ENCODE measurements at regions of chr16 and their contacts with region 1.

Region 1: GRCh38 chr16:56191156-56191815 is at the start of gene GNAO1:
- DNase-seq: peak; percentile 81
- total RNA-seq, gene GNAO1: 13.0 TPM

Region 2: GRCh38 chr16:55944377-55944802 is 246.9 kb before region 1 on chr16:
- intact Hi-C with region 1: loop called (anchors 10 kb)
- DNase-seq: peak; percentile 79

Region 3: DNA sequence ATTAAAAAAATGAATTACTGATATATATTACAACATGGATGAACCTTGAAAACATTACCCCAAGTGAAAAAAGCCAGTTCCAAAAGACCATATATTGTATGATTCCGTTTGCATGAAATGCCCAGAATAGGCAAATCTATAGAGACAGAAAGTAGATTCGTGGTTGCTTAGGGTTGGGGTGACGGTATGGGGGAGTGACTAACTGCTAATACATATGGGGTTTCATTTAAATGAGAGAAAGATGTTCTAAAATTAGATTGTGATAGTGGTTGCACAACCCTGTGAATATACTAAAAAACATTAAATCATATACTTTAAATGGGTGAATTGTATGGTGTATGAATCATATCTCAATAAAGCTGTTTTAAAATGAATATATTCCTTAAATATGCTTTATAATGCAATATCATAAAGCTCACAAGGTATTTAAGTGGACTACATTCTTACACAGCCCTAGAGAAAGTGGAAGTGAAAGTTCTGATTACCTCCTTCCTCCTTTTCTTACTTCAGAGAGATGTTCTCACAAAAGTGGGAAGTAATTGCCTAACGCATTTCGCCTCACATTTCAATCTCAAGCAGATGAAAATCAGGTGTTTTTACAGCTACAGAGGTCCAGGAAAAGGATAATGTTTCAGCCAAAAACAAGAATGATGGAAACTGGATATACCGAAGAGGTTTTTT is 142.7 kb before region 1 on chr16:
- intact Hi-C with region 1: loop called (anchors 5 kb)
- DNase-seq: no peak

Region 4: DNA sequence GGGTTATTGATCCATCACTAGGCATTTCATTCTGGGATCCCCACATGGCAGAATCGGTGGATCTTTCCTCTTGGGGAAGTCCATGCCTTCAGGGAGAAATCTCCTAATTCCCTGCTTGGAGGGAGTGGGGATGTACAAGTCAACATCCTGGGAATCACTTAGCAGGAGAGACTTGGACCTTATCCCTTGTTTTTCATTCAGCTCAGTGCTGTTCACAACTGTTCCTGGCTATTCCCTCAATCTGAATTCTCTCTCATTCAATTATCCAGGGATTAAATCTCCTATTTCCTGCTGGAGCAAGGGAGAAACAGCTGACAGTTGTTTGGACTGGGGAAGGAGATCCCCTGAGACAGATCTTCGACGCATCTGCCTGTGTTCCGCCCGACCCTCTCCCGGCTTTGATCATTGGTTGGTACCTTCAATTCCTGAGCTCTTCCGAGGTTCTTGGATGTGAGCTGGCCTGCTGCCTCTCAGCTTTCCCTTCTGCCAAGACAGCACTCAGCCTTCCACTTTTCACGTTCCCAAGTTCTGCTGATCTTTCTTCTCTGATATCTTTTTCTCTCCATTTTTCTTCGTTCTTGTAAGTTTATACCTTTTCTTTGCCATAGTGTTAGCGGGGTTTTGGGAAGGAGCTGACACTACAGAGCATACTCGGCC is 115.4 kb before region 1 on chr16:
- intact Hi-C with region 1: no loop called
- DNase-seq: no peak

Region 5: DNA sequence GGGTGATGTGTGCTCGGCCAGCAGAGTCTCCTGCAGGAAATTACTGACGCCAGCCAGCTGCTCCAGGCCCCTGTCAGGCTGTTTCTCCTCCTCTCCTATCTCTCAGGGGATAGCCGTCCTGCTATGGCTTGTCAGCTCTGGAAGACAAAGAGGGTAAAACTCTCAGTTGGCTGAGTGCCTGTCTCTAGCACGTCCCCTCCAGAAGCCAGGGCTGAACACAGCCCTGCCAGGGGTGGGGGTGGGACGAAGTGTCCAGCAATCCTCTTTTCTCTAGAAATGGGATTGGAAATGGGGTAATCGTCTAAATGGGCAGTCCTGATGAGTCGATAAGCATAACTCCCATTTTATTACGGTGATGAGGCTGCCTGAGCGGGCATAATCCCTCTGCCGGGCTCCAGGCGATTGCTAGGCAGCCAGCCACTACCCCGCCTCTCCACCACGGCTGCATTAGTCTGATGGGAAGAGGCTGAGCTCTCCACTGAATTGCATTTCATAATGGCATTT is 89.1 kb before region 1 on chr16:
- intact Hi-C with region 1: loop called (anchors 5 kb)
- DNase-seq: no peak

Region 6: DNA sequence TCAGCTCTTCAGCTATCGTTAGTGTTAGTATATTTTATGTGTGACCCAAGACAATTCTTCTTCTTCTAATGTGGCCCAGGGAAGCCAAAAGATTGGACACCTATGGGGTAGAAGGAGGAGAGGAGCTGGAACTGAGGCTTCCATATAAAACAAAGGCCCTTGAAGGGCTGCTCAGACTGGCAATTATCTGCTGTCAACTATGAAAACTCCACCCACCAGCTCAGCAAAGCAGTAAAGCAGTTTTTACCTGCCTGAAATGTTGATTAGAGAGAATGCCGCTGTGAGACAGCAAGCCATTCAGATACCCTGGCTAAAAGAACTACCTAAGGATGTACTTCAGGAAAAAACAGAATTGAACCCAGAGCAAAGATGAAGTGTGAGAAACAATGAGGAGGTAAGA is 45.9 kb before region 1 on chr16:
- intact Hi-C with region 1: no loop called
- DNase-seq: no peak

Region 7: GRCh38 chr16:56257239-56257638 is 66.0 kb after region 1 on chr16:
- intact Hi-C with region 1: loop called (anchors 5 kb)
- DNase-seq: no peak

Region 8: GRCh38 chr16:56294579-56294978 is 103.3 kb after region 1 on chr16:
- intact Hi-C with region 1: loop called (anchors 10 kb)
- DNase-seq: no peak

Region 9: GRCh38 chr16:56317998-56318826 is 126.9 kb after region 1 on chr16:
- intact Hi-C with region 1: loop called (anchors 5 kb)
- DNase-seq: peak; percentile 91